GM10248 (cell line): ENCODE measurements at regions of chr17 and their contacts with region 1.

Region 1: GRCh38 chr17:43338886-43339516 is 59.8 kb upstream of the ARL4D start:
- DNase-seq: no peak
- CTCF ChIP-seq: peak; percentile 59

Region 2: GRCh38 chr17:43024407-43025289 is 314.4 kb before region 1 on chr17 and contains the start of gene RND2:
- CTCF ChIA-PET with region 1: interaction called, 14 read pairs
- POLR2A ChIA-PET with region 1: no interaction called
- DNase-seq: peak; percentile 89
- CTCF ChIP-seq: peak; percentile 63

Region 3: GRCh38 chr17:43324205-43324893 is 14.7 kb before region 1 on chr17:
- CTCF ChIA-PET with region 1: interaction called, 14 read pairs
- POLR2A ChIA-PET with region 1: no interaction called
- DNase-seq: no peak
- CTCF ChIP-seq: peak; percentile 4

Region 4: GRCh38 chr17:43352579-43353331 is 13.8 kb after region 1 on chr17:
- CTCF ChIA-PET with region 1: interaction called, 24 read pairs
- POLR2A ChIA-PET with region 1: no interaction called
- DNase-seq: no peak
- CTCF ChIP-seq: no peak

Region 5: DNA sequence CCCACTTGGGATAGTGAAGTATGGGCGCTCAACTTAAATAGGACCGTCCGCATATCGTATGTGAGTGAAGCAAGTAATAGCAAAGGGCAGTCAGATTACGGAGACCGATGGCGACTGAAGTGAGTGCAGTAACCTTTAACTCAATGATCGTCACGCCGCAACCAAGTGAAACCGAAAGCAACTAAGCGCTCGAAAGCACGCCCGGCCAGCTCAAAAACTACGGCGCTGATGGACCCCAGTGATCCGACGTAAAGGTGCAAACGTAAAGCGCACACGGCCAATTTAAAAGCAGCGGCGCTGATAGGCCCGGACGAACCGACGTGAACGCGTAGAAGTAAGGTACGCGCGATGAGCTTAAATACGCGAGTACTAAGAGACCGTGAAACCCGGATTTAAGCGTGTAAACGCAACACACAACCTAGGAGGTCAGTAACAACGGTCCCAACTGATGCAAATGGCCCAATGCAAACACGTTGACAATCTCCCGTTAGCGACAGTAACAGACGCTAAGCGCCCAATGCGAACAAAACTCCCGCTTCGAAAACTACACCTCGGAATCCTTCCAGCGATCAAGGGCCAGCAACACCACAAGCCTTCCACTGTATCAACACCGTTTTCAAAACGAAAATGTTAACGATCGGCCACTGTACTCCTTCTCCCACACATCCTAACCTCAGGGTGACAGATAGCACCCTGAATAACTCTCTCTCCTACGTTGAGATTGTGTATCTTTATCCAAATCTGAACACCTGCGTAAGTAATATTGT is 21.9 kb after region 1 on chr17:
- CTCF ChIA-PET with region 1: interaction called, 24 read pairs
- POLR2A ChIA-PET with region 1: interaction called, 4 read pairs
- DNase-seq: peak; percentile 84
- CTCF ChIP-seq: no peak

Region 6: DNA sequence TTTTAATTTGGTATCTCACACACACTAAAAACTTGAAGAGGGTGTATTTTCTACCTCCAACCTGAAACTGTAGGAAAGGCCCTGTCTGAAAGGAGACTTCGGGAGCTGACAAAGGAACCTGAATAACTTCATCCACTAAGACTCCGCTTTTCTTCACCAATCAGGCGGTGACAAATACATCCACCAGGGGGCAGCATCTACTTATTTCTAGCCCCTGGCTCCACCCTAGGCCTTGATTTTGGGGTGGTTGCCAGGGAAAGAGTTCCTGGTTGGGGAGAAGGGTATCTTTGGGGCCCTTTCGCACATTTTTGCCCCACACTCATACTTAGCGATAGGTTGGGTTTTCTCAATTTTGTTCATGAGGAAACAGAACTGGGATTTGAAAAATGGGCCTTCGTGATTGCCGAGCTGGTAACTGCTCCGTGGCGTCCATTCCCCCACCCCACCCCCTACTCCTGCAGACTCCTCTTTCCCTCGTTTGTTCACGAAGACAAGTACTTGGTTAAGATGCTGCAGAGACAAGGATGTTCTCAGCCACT is 55.0 kb after region 1 on chr17:
- CTCF ChIA-PET with region 1: no interaction called
- POLR2A ChIA-PET with region 1: no interaction called
- DNase-seq: peak; percentile 86
- CTCF ChIP-seq: peak; percentile 83

Region 7: GRCh38 chr17:43416998-43417891 is 78.2 kb after region 1 on chr17:
- CTCF ChIA-PET with region 1: no interaction called
- POLR2A ChIA-PET with region 1: no interaction called
- DNase-seq: no peak
- CTCF ChIP-seq: no peak